ENCODE measurements at regions of chr5 and their contacts with region 1.

Region 1: DNA sequence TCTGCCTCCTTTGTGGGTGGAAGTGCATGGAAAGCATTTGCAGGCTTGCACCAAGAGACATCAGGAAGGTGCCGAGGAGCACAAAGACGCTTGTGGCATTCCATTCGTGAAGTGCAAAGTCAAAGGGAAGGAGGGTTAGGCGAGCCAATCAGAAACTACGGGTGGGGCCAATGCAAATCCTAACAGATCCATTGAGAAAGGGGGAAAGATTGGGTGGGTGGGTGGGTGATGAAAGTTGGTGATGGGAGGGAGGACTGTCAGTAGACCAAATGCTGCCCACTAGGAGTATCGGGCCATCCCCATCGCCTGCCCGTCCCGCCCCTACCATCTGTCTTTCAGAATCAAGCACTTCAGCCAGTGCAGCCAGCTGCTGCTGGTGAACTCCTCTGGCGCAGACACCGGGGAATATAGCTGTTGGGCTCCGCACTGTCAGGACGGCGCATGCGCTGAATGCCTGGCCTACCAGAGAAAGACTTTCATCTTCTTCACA is 17.1 kb upstream of the ANXA6 start:
- DNase-seq: no peak
- H3K4me3 ChIP-seq: no peak overlapping the region
- H3K27ac ChIP-seq: no peak overlapping the region
- H3K4me1 ChIP-seq: no peaks in the 10 kb centered on the region
- H3K27me3 ChIP-seq: no peaks in the 10 kb centered on the region
- CTCF ChIP-seq: no peak

Region 2: GRCh38 chr5:151200913-151201595 is 26.4 kb after region 1 on chr5:
- CTCF ChIA-PET with region 1: no interaction called
- dilution Hi-C with region 1: no loop called
- in situ Hi-C with region 1: no loop called
- intact Hi-C with region 1: loop called (anchors 2 kb)
- DNase-seq: no peak
- H3K4me3 ChIP-seq: no peak overlapping the region
- H3K27ac ChIP-seq: no peak overlapping the region
- H3K4me1 ChIP-seq: peaks cover 9% of the 10 kb centered on the region
- H3K27me3 ChIP-seq: no peaks in the 10 kb centered on the region
- CTCF ChIP-seq: no peak

Region 3: DNA sequence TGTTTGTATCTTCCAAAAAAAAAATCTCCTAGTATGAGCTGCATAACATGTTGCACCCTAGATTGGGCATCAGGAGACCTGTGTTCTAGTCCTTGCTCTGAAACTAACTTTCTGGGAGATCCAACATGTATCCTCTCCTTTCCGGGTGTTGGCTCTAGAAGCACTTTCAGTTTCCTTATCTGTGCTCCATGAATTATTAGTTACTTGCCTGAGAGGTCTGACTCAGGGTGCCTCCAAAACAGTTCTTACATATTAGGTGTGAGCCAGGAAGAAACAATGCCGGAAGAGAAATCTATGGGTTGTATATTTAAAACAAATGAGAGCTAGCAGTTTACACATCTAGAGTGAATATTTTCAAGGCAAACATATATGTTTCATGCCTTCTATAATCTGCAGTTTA is 209.4 kb after region 1 on chr5:
- CTCF ChIA-PET with region 1: no interaction called
- dilution Hi-C with region 1: no loop called
- in situ Hi-C with region 1: no loop called
- intact Hi-C with region 1: no loop called
- DNase-seq: peak; percentile 26
- H3K4me3 ChIP-seq: no peak overlapping the region
- H3K27ac ChIP-seq: no peak overlapping the region
- H3K4me1 ChIP-seq: no peaks in the 10 kb centered on the region
- H3K27me3 ChIP-seq: no peaks in the 10 kb centered on the region
- CTCF ChIP-seq: no peak

Measured in mammary epithelial cell (primary cell).